Activated naive CD4-positive, alpha-beta T cell treated with anti-CD3 and anti-CD28 coated beads for 36 hours (primary cell): ENCODE measurements at regions of chr2 and their contacts with region 1.

Region 1: GRCh38 chr2:190822043-190822442 is 58.6 kb upstream of the GLS start:
- DNase-seq: no peak
- H3K4me3 Mint-ChIP-seq: no peak overlapping the region
- H3K27ac Mint-ChIP-seq: no peak overlapping the region
- H3K4me1 Mint-ChIP-seq: no peaks in the 10 kb centered on the region
- H3K27me3 Mint-ChIP-seq: no peaks in the 10 kb centered on the region

Region 2: GRCh38 chr2:190277234-190278112 is 544.6 kb before region 1 on chr2:
- CTCF ChIA-PET with region 1: no interaction called
- intact Hi-C with region 1: no loop called
- DNase-seq: peak; percentile 51
- H3K4me3 Mint-ChIP-seq: no peak overlapping the region
- H3K27ac Mint-ChIP-seq: no peak overlapping the region
- H3K4me1 Mint-ChIP-seq: peaks cover 2% of the 10 kb centered on the region
- H3K27me3 Mint-ChIP-seq: no peaks in the 10 kb centered on the region

Region 3: GRCh38 chr2:190838492-190838910 is 16.5 kb after region 1 on chr2:
- CTCF ChIA-PET with region 1: no interaction called
- intact Hi-C with region 1: loop called (anchors 2 kb)
- DNase-seq: no peak
- H3K4me3 Mint-ChIP-seq: no peak overlapping the region
- H3K27ac Mint-ChIP-seq: no peak overlapping the region
- H3K4me1 Mint-ChIP-seq: peaks cover 39% of the 10 kb centered on the region
- H3K27me3 Mint-ChIP-seq: no peaks in the 10 kb centered on the region

Region 4: DNA sequence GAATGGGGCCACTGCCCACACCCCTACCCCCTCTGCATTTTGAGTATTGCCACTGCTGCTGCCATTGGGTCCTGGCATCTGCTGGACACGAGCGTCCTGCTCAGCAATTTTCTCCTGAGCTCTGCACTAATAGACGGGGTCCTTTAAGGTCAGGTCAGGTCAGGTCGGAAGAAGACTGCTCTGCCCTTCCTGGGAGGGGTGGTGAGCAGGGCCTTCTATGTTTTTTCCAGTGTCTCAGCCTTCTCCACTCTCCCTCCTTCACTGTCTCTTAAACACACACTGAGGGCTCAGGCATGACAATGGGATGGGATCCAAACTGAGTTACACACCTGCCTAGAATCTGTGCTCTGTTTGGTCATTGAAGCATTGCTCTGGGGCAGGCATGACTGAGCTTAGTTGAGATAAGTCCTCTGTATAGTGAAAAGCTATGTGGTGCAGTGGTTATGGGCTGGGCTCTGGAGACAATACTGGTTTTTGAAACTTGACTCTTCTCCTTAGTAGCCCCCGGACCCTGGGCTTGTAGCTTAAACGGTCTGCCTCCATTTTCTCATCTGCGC is 433.8 kb after region 1 on chr2:
- CTCF ChIA-PET with region 1: no interaction called
- intact Hi-C with region 1: no loop called
- DNase-seq: no peak
- H3K4me3 Mint-ChIP-seq: no peak overlapping the region
- H3K27ac Mint-ChIP-seq: no peak overlapping the region
- H3K4me1 Mint-ChIP-seq: no peaks in the 10 kb centered on the region
- H3K27me3 Mint-ChIP-seq: no peaks in the 10 kb centered on the region